ENCODE measurements at regions of chr1 and their contacts with region 1.

Region 1: GRCh38 chr1:62783723-62784508 is at the start of gene ATG4C:
- DNase-seq: peak; percentile 97
- H3K4me3 ChIP-seq: peak within 1 kb of the TSS; percentile 70
- H3K27ac ChIP-seq: peak within 1 kb of the TSS; percentile 86
- H3K4me1 ChIP-seq: peaks cover 11% of the 10 kb centered on the region
- H3K27me3 ChIP-seq: no peaks in the 10 kb centered on the region
- CTCF ChIP-seq: no peak
- total RNA-seq, gene ATG4C: 14.4 and 15.1 TPM in 2 replicates

Region 2: DNA sequence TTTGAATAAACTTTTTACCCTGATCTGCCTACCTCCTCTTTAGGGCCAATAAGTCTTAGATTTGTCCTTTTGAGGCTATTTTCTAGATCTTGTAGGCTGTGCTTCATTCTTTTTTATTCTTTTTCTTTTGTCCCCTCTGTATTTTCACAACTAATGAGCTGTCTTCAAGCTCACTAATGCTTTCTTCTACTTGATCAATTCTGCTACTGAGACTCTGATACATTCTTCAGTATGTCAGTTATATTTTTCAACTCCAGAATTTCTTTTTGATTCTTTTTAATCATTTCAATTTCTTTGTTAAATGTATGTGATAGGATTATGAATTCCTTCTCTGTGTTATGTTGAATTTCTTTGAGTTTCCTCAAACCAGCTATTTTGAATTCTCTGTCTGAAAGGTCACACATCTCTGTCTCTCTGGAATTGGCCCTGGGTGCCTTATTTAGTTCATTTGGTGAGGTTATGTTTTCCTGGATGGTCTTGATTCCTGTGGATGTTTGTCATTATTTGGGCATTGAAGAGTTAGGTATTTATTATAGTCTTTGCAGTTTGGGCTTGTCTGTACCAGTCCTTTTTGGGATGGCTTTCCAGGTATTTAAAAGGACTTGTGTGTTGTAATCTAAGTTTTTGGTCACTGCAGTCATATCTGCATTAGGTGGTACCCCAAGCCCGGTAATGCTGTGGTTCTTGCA is 11.2 kb before region 1 on chr1:
- CTCF ChIA-PET with region 1: no interaction called
- POLR2A ChIA-PET with region 1: interaction called, 15 read pairs
- intact Hi-C with region 1: no loop called
- DNase-seq: no peak
- H3K4me3 ChIP-seq: no peak overlapping the region
- H3K27ac ChIP-seq: no peak overlapping the region
- H3K4me1 ChIP-seq: no peaks in the 10 kb centered on the region
- H3K27me3 ChIP-seq: no peaks in the 10 kb centered on the region
- CTCF ChIP-seq: no peak